Ovary (tissue), 10 donors: ENCODE measurements at regions of chr6 and their contacts with region 1.

Region 1: GRCh38 chr6:56613247-56613851 is 29.3 kb downstream of the DST start:
- DNase-seq: no peak
- H3K4me3 ChIP-seq: no peak overlapping the region
- H3K27ac ChIP-seq: no peak overlapping the region
- H3K4me1 ChIP-seq: no peaks in the 10 kb centered on the region
- H3K27me3 ChIP-seq: no peaks in the 10 kb centered on the region
- CTCF ChIP-seq: no peak
- EP300 ChIP-seq: no peak
- POLR2A ChIP-seq: no peak

Region 2: DNA sequence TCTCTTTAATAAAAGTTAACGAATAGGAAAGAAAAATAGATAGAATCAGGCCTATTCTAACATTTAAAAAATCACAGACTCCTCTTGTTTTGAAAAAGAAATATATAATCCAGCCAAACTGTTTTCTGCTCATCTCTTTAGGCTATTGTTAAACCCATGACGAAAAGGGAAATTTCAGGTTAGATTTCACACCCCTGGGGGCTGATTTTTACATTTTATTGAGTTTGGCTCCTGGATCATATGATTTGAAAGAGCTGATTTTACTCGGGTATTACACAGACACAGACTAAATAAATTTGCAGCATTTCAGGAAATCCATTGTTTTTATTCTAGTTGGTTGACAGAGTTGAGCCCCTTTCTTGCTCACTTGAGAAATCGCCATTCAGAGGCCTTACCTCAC is 898.5 kb before region 1 on chr6:
- intact Hi-C with region 1: loop called in 1 of 4 experiments (anchors 5 kb)
- DNase-seq: no peak
- H3K4me3 ChIP-seq: no peak overlapping the region
- H3K27ac ChIP-seq: no peak overlapping the region
- H3K4me1 ChIP-seq: no peaks in the 10 kb centered on the region
- H3K27me3 ChIP-seq: no peaks in the 10 kb centered on the region
- CTCF ChIP-seq: no peak
- EP300 ChIP-seq: no peak
- POLR2A ChIP-seq: no peak

Region 3: GRCh38 chr6:56406276-56407269 is 206.8 kb before region 1 on chr6:
- intact Hi-C with region 1: no loop called
- DNase-seq: no peak
- H3K4me3 ChIP-seq: no peak overlapping the region
- H3K27ac ChIP-seq: no peak overlapping the region
- H3K4me1 ChIP-seq: peaks cover 2% of the 10 kb centered on the region
- H3K27me3 ChIP-seq: no peaks in the 10 kb centered on the region
- CTCF ChIP-seq: no peak
- EP300 ChIP-seq: no peak
- POLR2A ChIP-seq: no peak

Region 4: GRCh38 chr6:56555438-56555872 is 57.9 kb before region 1 on chr6:
- intact Hi-C with region 1: no loop called
- DNase-seq: peak in 2 of 5 donors; percentile 18 to 32
- H3K4me3 ChIP-seq: no peak overlapping the region
- H3K27ac ChIP-seq: peak overlapping the region in 1 of 2 donors; percentile 51
- H3K4me1 ChIP-seq: peaks cover 4% of the 10 kb centered on the region
- H3K27me3 ChIP-seq: no peaks in the 10 kb centered on the region
- CTCF ChIP-seq: no peak
- EP300 ChIP-seq: no peak
- POLR2A ChIP-seq: no peak